Heart left ventricle (tissue), 16 donors: ENCODE measurements at regions of chr3 and their contacts with region 1.

Region 1: DNA sequence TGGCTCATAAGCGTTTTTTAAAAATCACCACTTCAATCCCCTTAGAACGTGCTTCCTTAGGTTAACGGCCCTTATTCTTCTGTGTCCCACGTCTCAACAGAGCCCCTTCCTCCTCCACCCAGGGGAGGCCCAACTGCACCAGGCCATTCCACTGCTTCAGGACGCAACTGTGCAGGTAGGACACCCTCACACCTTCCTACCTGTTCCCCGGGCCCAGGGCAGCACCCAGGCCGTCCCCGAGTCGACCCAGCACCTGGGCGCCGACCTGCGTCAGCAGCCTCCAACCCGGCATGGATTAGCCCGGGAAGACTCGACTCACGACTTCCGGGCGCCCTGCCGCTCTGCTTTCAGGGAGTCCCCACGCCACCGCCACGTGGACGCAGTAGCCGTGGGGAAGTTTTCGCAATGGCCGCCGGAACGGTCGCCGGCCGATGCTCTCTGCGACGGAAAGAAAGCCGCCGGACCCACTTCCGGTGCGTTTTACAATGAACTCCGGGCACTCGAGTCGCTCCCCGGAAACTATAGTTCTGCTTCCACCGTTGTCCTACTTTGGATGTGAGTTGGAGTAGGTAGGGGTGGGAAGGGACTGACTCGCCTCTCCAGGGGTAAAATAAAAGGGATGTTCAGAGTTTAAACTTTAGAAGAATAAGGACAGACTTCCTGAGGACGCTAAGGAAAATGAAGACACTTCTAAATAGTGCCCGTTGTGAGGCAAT is at the start of gene MRPL3:
- DNase-seq: peak; percentile 81 to 92 (median 88)
- ATAC-seq: peak; percentile 95 to 98 (median 98)
- H3K4me3 ChIP-seq: peak within 1 kb of the TSS; percentile 67 to 97 (median 90)
- H3K27ac ChIP-seq: peak within 1 kb of the TSS; percentile 29 to 86 (median 80)
- H3K4me1 ChIP-seq: peaks cover 0 to 39% (median 16%) of the 10 kb centered on the region in 12 donors
- H3K27me3 ChIP-seq: no peaks in the 10 kb centered on the region
- CTCF ChIP-seq: no peak
- POLR2A ChIP-seq: peak in 1 of 2 donors; percentile 57
- total RNA-seq, gene MRPL3: 50.3 to 68.7 (median 51.9) TPM

Region 2: DNA sequence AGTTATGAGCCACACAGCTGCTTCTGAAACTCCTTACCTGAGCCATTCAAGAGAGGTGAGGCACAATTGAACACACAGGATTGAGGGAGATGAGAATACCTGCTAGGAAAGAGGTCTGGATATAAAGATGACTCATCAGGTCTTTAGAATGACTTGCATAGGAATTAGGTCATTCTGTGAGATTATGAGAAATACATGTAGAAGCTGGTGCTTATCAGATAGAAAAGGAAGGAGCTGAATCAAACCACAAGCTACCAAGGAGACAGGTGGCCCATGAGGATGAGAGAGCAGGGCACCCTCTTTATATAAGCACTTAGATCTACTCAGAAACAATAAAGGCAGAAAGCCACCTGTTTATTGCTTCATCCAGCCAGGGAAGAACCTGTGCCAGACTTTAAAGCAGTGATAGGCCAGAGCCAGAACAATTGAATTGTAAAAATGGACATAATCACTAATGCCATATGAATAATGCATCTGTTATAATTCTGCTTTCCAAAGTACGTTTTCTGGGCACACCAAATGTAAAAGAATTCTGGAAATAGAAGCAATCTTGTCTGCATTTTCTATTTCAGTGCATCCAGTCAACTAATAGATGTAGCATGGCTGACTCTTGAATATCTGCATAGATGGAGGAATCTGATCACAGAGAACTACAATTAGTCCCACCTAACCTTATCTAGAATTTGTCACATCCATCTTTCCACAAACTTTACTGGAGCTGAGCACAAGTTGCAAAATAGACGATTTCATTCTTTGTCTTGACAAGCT is 831.0 kb before region 1 on chr3:
- intact Hi-C with region 1: no loop called
- DNase-seq: no peak
- ATAC-seq: no peak
- H3K4me3 ChIP-seq: no peak overlapping the region
- H3K27ac ChIP-seq: no peak overlapping the region
- H3K4me1 ChIP-seq: no peaks in the 10 kb centered on the region
- H3K27me3 ChIP-seq: no peaks in the 10 kb centered on the region
- CTCF ChIP-seq: no peak
- POLR2A ChIP-seq: no peak

Region 3: DNA sequence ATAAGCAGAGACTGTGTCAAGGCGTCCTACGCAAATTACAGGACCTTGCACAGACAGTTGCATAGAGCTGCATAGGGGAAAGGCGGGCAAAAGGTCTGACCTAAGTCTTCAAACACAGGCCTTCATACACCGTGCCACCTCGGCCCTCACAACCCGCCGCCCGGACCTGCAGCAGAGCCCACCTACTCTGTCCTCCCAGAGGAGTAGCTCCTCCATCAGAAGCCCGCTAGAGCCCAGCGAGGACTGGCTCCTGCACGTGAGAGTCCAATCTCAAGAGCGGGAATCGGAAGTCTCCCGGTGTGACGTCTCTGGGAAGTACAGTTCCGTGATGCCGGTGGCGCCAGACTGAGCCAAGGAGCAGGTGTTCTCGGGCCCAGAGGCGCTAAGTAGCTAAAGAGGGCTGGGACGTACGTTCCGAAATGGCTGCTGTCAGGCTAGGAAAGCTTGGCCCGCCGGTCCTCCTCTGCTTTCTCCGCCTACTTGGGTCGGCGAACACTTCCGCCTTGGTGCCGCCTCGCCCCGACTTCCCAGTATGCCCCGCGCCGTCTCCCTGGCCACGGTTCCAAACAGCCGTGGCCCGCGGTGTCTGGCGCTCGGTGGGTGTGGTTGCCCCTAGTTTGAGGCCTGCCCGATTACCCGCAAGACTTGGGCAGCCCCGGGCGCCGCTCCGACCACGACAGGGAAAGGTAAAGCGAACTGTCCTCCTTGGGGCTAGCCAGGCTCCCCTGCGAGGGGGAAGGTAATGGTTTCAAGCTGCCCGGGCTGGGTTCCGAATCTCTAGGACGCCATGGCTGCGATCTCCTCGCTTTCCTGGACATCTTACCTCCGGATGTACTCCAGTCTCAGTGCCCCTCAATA is 476.1 kb before region 1 on chr3 and contains the starts of genes ASTE1 and NEK11:
- intact Hi-C with region 1: loop called in 2 of 10 experiments (anchors 5 to 10 kb)
- DNase-seq: peak; percentile 89 to 95 (median 92)
- ATAC-seq: peak; percentile 95 to 99 (median 99)
- H3K4me3 ChIP-seq: peak within 1 kb of the TSS; percentile 58 to 90 (median 68)
- H3K27ac ChIP-seq: peak within 1 kb of the TSS; percentile 57 to 93 (median 84)
- H3K4me1 ChIP-seq: peaks cover 0 to 50% (median 20%) of the 10 kb centered on the region in 12 donors
- H3K27me3 ChIP-seq: no peaks in the 10 kb centered on the region
- CTCF ChIP-seq: no peak
- POLR2A ChIP-seq: peak in 1 of 2 donors; percentile 51
- total RNA-seq, gene ASTE1: 1.9 to 5.7 (median 3.1) TPM
- total RNA-seq, gene NEK11: 1.5 to 4.3 (median 2.1) TPM

Region 4: DNA sequence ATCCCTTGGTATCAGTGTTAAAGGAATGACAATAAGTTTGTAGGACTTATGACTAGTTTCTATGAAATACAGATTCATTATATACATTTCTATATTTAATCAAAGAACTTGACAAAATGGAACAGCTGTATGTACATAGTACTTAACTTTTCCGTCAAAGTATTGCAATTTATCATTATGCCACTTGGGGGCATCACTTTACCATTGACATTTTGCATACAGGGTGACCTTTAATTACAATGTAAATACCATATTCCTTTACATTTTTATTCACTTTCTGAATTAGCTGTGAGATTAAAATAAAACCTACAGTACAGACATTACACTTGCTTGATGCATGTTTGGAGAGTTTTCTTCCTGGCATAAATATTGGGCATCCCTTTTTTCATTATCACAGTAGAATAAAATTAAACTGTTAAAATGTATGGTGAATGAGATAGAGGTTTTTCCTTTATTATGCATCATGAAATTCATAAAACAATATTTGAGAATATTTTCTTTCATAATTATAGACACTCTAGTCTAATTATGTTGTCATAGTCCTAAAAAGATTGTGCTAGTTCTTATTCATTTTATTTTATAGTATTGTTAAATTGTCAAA is 469.1 kb before region 1 on chr3:
- intact Hi-C with region 1: loop called in 2 of 10 experiments (anchors 5 to 10 kb)
- DNase-seq: no peak
- ATAC-seq: no peak
- H3K4me3 ChIP-seq: no peak overlapping the region
- H3K27ac ChIP-seq: no peak overlapping the region
- H3K4me1 ChIP-seq: no peaks in the 10 kb centered on the region
- H3K27me3 ChIP-seq: no peaks in the 10 kb centered on the region
- CTCF ChIP-seq: peak; percentile 49 to 73 (median 62)
- POLR2A ChIP-seq: no peak

Region 5: GRCh38 chr3:131047582-131047981 is 455.1 kb before region 1 on chr3:
- intact Hi-C with region 1: loop called in 2 of 10 experiments (anchors 10 kb)
- DNase-seq: no peak
- ATAC-seq: no peak
- H3K4me3 ChIP-seq: no peak overlapping the region
- H3K27ac ChIP-seq: no peak overlapping the region
- H3K4me1 ChIP-seq: no peaks in the 10 kb centered on the region
- H3K27me3 ChIP-seq: no peaks in the 10 kb centered on the region
- CTCF ChIP-seq: no peak
- POLR2A ChIP-seq: no peak

Region 6: DNA sequence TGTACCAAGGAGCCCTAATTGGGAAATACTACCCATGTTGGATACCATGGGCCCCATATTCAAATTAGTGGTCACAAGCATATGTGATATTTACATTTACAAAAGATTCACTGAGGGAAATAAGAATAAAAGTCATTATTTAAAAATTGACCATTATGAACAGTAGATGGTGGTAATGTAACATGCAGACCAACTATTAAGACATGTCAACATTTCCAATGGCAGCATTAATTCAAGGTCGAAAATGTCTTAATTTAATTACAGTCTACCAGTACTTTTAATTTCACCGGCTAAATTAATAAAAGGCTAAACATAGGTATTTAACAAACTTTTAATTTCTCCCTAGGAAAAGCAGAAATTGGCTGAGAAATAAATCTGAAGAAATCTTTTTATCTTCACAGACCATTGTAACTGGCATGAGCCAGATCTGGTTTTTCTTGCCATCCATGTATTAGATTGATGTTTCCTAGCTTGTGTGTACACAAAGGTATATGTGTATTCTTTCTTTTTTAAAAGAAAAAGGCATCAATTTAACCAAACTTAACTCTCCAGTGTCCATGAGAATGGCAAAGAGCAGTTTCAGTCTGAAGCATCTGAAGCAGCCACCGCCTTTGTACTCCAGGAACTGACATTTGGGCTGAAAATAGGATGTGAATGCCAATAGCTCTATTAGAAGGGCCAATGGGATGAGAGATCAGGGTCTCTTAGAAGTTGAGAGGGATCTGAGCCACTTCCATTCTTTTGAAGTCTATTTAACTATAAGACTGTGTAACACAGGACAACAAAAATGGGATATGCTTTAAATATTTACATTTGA is 449.4 kb before region 1 on chr3:
- intact Hi-C with region 1: loop called in 2 of 10 experiments (anchors 10 kb)
- DNase-seq: no peak
- ATAC-seq: no peak
- H3K4me3 ChIP-seq: no peak overlapping the region
- H3K27ac ChIP-seq: no peak overlapping the region
- H3K4me1 ChIP-seq: no peaks in the 10 kb centered on the region
- H3K27me3 ChIP-seq: no peaks in the 10 kb centered on the region
- CTCF ChIP-seq: peak; percentile 22 to 70 (median 54)
- POLR2A ChIP-seq: no peak